PC-9 (cell line): ENCODE measurements at regions of chr12 and their contacts with region 1.

Region 1: DNA sequence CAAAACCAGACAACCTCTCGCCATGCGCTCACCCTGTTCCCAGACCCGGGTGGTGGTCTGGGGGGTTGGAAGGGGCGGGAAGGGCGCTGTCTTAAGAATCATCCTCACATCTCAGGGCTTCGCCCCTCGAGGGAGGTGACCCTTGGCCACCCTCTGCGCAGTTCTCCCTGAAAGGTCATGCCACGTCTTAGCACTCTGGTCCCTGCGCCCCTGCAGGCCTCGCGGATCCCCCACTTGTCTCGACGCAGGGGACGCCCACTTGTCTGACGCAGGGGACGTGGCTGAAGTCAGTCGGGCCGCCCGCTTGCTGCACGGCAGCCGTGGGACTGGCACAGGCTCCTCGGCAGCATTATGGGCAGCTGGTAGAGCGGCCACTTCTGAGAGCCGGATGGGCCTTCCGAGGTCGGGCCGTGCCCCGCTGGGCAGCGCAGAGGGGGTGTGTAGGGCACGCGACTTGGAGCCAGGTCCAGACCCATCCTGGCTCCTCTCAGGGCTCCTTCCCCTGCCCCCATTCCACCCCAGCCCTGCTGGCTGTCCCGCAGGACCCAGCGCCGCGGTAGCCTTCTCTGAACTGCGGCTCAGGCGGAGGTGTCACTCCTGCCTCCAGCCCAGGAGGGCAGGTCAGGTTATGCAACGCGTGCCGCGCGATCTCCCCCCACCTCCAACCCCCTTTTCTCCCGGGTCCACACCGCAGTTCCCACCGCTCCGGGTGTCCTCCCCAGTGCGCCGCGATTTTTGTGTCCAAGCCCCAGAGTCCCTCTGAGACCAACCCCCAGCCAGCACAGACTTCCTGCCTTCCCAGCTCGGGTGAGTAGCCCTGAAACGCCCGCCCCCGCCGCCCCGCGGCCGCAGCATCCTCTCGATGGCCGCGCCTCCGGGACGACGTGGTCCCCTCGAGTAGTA is 40.9 kb upstream of the CAPRIN2 start:
- DNase-seq: peak; percentile 67 to 78
- H3K4me3 ChIP-seq: peak overlapping the region; percentile 82
- H3K27ac ChIP-seq: peak overlapping the region; percentile 94
- H3K4me1 ChIP-seq: peaks cover 55% of the 10 kb centered on the region
- H3K27me3 ChIP-seq: no peaks in the 10 kb centered on the region
- CTCF ChIP-seq: no peak

Region 2: GRCh38 chr12:28893365-28893764 is 1902.3 kb before region 1 on chr12:
- CTCF ChIA-PET with region 1: no interaction called
- POLR2A ChIA-PET with region 1: no interaction called
- intact Hi-C with region 1: no loop called
- DNase-seq: no peak
- H3K4me3 ChIP-seq: no peak overlapping the region
- H3K27ac ChIP-seq: no peak overlapping the region
- H3K4me1 ChIP-seq: no peaks in the 10 kb centered on the region
- H3K27me3 ChIP-seq: no peaks in the 10 kb centered on the region
- CTCF ChIP-seq: no peak

Region 3: DNA sequence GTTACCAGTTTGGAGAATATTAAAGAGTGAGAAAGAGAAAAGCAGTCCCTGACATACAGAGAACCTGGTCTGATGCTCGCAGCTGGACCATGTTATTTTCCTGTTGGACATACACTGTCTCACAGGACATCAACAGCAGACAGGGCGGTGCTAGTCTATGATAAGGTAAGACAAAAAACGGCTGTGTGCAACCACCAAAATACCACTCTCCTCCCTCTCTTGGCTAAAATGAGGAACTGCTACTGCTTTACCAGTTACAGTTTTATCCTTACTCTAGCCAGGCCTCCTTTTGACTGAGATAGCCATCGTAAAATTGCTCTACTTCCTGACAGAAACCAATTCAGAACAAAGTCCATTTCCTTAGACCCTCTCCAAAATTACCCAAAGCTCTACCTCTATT is 1367.7 kb before region 1 on chr12:
- CTCF ChIA-PET with region 1: no interaction called
- POLR2A ChIA-PET with region 1: interaction called, 17 read pairs
- intact Hi-C with region 1: no loop called
- DNase-seq: no peak
- H3K4me3 ChIP-seq: no peak overlapping the region
- H3K27ac ChIP-seq: peak overlapping the region; percentile 66; the same call in 1 of the 2 replicates
- H3K4me1 ChIP-seq: peaks cover 19% of the 10 kb centered on the region
- H3K27me3 ChIP-seq: no peaks in the 10 kb centered on the region
- CTCF ChIP-seq: no peak

Region 4: GRCh38 chr12:30754709-30755394 is 40.8 kb before region 1 on chr12 and contains the start of gene CAPRIN2:
- CTCF ChIA-PET with region 1: interaction called, 11 read pairs
- POLR2A ChIA-PET with region 1: interaction called, 17 read pairs
- intact Hi-C with region 1: loop called (anchors 1 kb)
- DNase-seq: peak; percentile 86 to 100
- H3K4me3 ChIP-seq: peak within 1 kb of the TSS; percentile 74
- H3K27ac ChIP-seq: peak within 1 kb of the TSS; percentile 70
- H3K4me1 ChIP-seq: peaks cover 46% of the 10 kb centered on the region
- H3K27me3 ChIP-seq: no peaks in the 10 kb centered on the region
- CTCF ChIP-seq: peak; percentile 41; the same call in 1 of the 2 replicates
- total RNA-seq, gene CAPRIN2: 27.4 and 29.5 TPM in 2 replicates